HCT116 (cell line): ENCODE measurements at regions of chr1 and their contacts with region 1.

Region 1: GRCh38 chr1:150629115-150629928 is at the start of gene ENSA:
- DNase-seq: peak; percentile 99
- ATAC-seq: peak; percentile 92
- H3K4me3 ChIP-seq: peak within 1 kb of the TSS; percentile 65 to 79
- H3K27ac ChIP-seq: peak within 1 kb of the TSS; percentile 73
- H3K4me1 ChIP-seq: peaks cover 9 to 29% of the 10 kb centered on the region in 2 experiments
- H3K27me3 ChIP-seq: no peaks in the 10 kb centered on the region
- CTCF ChIP-seq: no peak
- POLR2A ChIP-seq: peak; percentile 55
- RAD21 ChIP-seq: no peak
- total RNA-seq, gene ENSA: 130 TPM

Region 2: GRCh38 chr1:150606463-150607148 is 22.7 kb before region 1 on chr1:
- CTCF ChIA-PET with region 1: no interaction called
- POLR2A ChIA-PET with region 1: interaction called, 11 read pairs
- RAD21 ChIA-PET with region 1: no interaction called
- intact Hi-C with region 1: no loop called
- DNase-seq: no peak
- ATAC-seq: no peak
- H3K4me3 ChIP-seq: no peak overlapping the region
- H3K27ac ChIP-seq: no peak overlapping the region
- H3K4me1 ChIP-seq: peaks cover 20 to 39% of the 10 kb centered on the region in 2 experiments
- H3K27me3 ChIP-seq: no peaks in the 10 kb centered on the region
- CTCF ChIP-seq: no peak
- POLR2A ChIP-seq: no peak
- RAD21 ChIP-seq: no peak

Region 3: GRCh38 chr1:150895601-150896000 is 266.3 kb after region 1 on chr1:
- CTCF ChIA-PET with region 1: no interaction called
- POLR2A ChIA-PET with region 1: no interaction called
- RAD21 ChIA-PET with region 1: no interaction called
- intact Hi-C with region 1: loop called (anchors 1 kb)
- DNase-seq: peak; percentile 58
- ATAC-seq: peak; percentile 99
- H3K4me3 ChIP-seq: no peak overlapping the region
- H3K27ac ChIP-seq: no peak overlapping the region
- H3K4me1 ChIP-seq: peaks cover 0 to 10% of the 10 kb centered on the region in 2 experiments; a peak in 2 of 4 replicates
- H3K27me3 ChIP-seq: no peaks in the 10 kb centered on the region
- CTCF ChIP-seq: no peak
- POLR2A ChIP-seq: no peak
- RAD21 ChIP-seq: no peak

Region 4: DNA sequence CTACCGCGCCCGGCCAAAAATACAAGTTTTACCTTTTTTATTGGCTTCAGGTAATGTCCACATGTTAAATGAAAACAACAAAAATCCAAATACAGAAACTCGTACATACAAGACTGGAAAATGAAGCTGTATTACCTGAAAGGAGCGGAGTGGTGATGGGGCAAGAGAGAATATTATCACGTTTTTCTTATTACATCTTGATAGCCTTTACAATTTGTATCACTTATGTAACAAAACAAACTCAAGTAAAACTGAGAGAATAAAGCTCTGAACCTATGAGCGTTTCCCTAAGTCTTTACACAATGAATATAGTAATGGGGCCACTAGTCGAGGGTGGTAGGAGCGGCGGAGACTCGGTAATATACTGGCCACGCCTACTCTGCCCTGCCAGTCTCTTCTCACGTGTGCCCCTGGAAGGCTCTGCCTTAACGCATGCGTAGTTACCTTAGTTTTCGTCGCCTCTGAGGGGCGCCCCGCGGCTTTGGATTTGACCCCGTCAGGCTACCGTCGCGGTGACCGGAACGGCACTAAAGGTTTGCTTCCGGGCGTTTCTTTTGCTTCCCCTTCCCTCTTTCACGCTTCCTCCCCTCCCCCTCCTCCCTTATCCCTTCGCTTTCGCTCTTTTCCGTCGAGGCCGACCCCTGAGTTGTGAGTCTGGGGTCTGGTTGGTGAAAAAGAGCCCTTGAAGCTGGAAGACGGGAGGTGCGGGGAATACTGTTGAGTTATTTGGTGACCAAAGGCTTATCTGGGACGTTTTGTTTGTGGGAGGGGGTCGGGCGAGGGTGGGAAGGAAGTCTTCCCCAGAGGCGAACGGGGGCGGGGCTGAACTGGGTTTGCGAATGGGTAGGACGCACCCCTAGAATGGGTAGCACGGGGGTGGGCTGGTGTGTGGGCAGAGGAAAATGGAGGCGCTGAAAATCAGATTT is 296.8 kb after region 1 on chr1 and contains the start of gene SETDB1:
- CTCF ChIA-PET with region 1: interaction called, 4 read pairs
- POLR2A ChIA-PET with region 1: no interaction called
- RAD21 ChIA-PET with region 1: interaction called in 1 of 2 experiments, 3 read pairs
- intact Hi-C with region 1: loop called (anchors 10 kb)
- DNase-seq: peak; percentile 95
- ATAC-seq: peak; percentile 93
- H3K4me3 ChIP-seq: peak within 1 kb of the TSS; percentile 74 to 77
- H3K27ac ChIP-seq: peak within 1 kb of the TSS; percentile 60
- H3K4me1 ChIP-seq: peaks cover 6 to 30% of the 10 kb centered on the region in 2 experiments
- H3K27me3 ChIP-seq: no peaks in the 10 kb centered on the region
- CTCF ChIP-seq: no peak
- POLR2A ChIP-seq: peak; percentile 56
- RAD21 ChIP-seq: no peak
- total RNA-seq, gene SETDB1: 54.3 TPM

Region 5: GRCh38 chr1:150995896-150996295 is 366.6 kb after region 1 on chr1:
- CTCF ChIA-PET with region 1: no interaction called
- POLR2A ChIA-PET with region 1: no interaction called
- RAD21 ChIA-PET with region 1: no interaction called
- intact Hi-C with region 1: loop called (anchors 5 kb)
- DNase-seq: no peak
- ATAC-seq: peak; percentile 73
- H3K4me3 ChIP-seq: no peak overlapping the region
- H3K27ac ChIP-seq: no peak overlapping the region
- H3K4me1 ChIP-seq: peaks cover 6 to 37% of the 10 kb centered on the region in 2 experiments; a peak in 3 of 4 replicates
- H3K27me3 ChIP-seq: no peaks in the 10 kb centered on the region
- CTCF ChIP-seq: peak; percentile 61 to 85 (median 76); a peak in 5 of 6 replicates
- POLR2A ChIP-seq: no peak
- RAD21 ChIP-seq: peak; percentile 87

Region 6: GRCh38 chr1:151585622-151586021 is 956.3 kb after region 1 on chr1:
- CTCF ChIA-PET with region 1: no interaction called
- POLR2A ChIA-PET with region 1: no interaction called
- RAD21 ChIA-PET with region 1: no interaction called
- intact Hi-C with region 1: no loop called
- DNase-seq: peak; percentile 37
- ATAC-seq: peak; percentile 84
- H3K4me3 ChIP-seq: no peak overlapping the region
- H3K27ac ChIP-seq: peak overlapping the region; percentile 38; the same call in 1 of the 2 replicates
- H3K4me1 ChIP-seq: peaks cover 15 to 21% of the 10 kb centered on the region in 2 experiments
- H3K27me3 ChIP-seq: no peaks in the 10 kb centered on the region
- CTCF ChIP-seq: no peak
- POLR2A ChIP-seq: no peak
- RAD21 ChIP-seq: 0 out of 2 replicates have a peak, but pooled peaks have one; percentile 2